Panc1 (cell line): ENCODE measurements at regions of chr6 and their contacts with region 1.

Region 1: GRCh38 chr6:106857771-106858652 is 116.5 kb downstream of the CD24 start:
- DNase-seq: no peak
- ATAC-seq: no peak
- H3K4me3 ChIP-seq: no peak overlapping the region
- H3K27ac ChIP-seq: no peak overlapping the region
- H3K4me1 ChIP-seq: no peaks in the 10 kb centered on the region
- H3K27me3 ChIP-seq: no peaks in the 10 kb centered on the region
- CTCF ChIP-seq: no peak; the same call in 1 of the 2 replicates

Region 2: GRCh38 chr6:106844930-106845329 is 13.1 kb before region 1 on chr6:
- CTCF ChIA-PET with region 1: no interaction called
- POLR2A ChIA-PET with region 1: interaction called, 10 read pairs
- in situ Hi-C with region 1: no loop called
- intact Hi-C with region 1: no loop called
- DNase-seq: no peak
- ATAC-seq: no peak
- H3K4me3 ChIP-seq: no peak overlapping the region
- H3K27ac ChIP-seq: no peak overlapping the region
- H3K4me1 ChIP-seq: no peaks in the 10 kb centered on the region
- H3K27me3 ChIP-seq: peaks cover 3% of the 10 kb centered on the region; the same call in 1 of the 2 replicates
- CTCF ChIP-seq: no peak